Vagina (tissue), 2 donors: ENCODE measurements at regions of chr5 and their contacts with region 1.

Region 1: GRCh38 chr5:159106569-159107282 is 7.0 kb upstream of the EBF1 start:
- DNase-seq: no peak
- H3K4me3 ChIP-seq: peak overlapping the region; percentile 20 to 29
- H3K27ac ChIP-seq: no peak overlapping the region
- H3K4me1 ChIP-seq: peaks cover 10% of the 10 kb centered on the region
- H3K27me3 ChIP-seq: no peaks in the 10 kb centered on the region
- CTCF ChIP-seq: peak; percentile 51 to 92 (median 92)
- POLR2A ChIP-seq: no peak

Region 2: GRCh38 chr5:158026304-158027031 is 1080.3 kb before region 1 on chr5:
- intact Hi-C with region 1: loop called (anchors 10 kb)
- DNase-seq: no peak
- H3K4me3 ChIP-seq: no peak overlapping the region
- H3K27ac ChIP-seq: peak overlapping the region; percentile 45
- H3K4me1 ChIP-seq: peaks cover 11% of the 10 kb centered on the region
- H3K27me3 ChIP-seq: no peaks in the 10 kb centered on the region
- CTCF ChIP-seq: no peak
- POLR2A ChIP-seq: no peak

Region 3: DNA sequence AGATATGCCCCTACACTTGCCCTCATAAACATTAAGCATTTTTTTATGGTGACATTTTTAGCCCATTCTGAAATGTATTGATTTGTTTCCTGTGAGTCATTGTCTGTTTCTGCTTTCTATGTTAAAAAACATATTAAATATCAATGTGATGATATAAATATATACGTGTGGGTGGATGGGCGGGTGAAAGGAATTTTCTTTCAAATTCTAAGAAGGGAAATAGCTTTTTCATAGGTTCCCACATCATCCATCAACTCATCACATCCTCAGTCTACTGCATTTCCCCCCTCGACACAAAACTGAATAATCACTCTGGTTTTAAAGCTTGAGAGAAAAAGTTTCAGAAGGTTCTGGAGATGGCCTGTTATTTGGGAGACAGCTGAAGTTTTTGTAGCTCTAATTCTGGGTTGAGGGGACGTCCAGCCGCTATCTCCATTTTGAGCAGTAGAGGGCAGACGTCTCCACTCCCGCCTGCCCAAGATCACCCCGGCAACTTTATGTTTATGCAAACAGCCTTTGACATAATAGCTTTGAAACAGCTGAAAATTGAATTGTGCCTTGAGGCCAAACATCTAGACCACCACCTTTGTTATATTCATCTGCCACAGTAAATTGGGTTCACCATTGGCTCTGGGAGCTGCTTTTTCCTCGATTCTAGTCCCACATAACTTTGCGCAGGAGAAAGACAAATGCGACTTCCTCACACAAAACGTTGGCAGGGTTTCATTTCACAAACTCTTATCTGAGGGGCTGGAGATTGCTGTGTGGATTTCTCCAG is 1031.5 kb before region 1 on chr5:
- intact Hi-C with region 1: loop called (anchors 10 kb)
- DNase-seq: no peak
- H3K4me3 ChIP-seq: peak overlapping the region in 1 of 2 donors; percentile 27
- H3K27ac ChIP-seq: no peak overlapping the region
- H3K4me1 ChIP-seq: no peaks in the 10 kb centered on the region
- H3K27me3 ChIP-seq: no peaks in the 10 kb centered on the region
- CTCF ChIP-seq: peak; percentile 45 to 77 (median 68)
- POLR2A ChIP-seq: no peak

Region 4: GRCh38 chr5:159050316-159051143 is 56.2 kb before region 1 on chr5:
- intact Hi-C with region 1: no loop called
- DNase-seq: no peak
- H3K4me3 ChIP-seq: peak overlapping the region; percentile 19 to 38
- H3K27ac ChIP-seq: peak overlapping the region; percentile 75
- H3K4me1 ChIP-seq: peaks cover 19% of the 10 kb centered on the region
- H3K27me3 ChIP-seq: no peaks in the 10 kb centered on the region
- CTCF ChIP-seq: no peak
- POLR2A ChIP-seq: no peak